HCT116 (cell line): ENCODE measurements at regions of chr22 and their contacts with region 1.

Region 1: GRCh38 chr22:37316875-37317371 is 34.6 kb downstream of the CYTH4 start:
- DNase-seq: peak; percentile 90
- ATAC-seq: peak; percentile 84
- H3K4me3 ChIP-seq: no peak overlapping the region
- H3K27ac ChIP-seq: peak overlapping the region; percentile 100
- H3K4me1 ChIP-seq: peaks cover 60 to 81% of the 10 kb centered on the region in 2 experiments
- H3K27me3 ChIP-seq: no peaks in the 10 kb centered on the region
- CTCF ChIP-seq: peak in 2 of 3 experiments; percentile 99; a peak in 4 of 6 replicates
- POLR2A ChIP-seq: no peak
- RAD21 ChIP-seq: no peak

Region 2: DNA sequence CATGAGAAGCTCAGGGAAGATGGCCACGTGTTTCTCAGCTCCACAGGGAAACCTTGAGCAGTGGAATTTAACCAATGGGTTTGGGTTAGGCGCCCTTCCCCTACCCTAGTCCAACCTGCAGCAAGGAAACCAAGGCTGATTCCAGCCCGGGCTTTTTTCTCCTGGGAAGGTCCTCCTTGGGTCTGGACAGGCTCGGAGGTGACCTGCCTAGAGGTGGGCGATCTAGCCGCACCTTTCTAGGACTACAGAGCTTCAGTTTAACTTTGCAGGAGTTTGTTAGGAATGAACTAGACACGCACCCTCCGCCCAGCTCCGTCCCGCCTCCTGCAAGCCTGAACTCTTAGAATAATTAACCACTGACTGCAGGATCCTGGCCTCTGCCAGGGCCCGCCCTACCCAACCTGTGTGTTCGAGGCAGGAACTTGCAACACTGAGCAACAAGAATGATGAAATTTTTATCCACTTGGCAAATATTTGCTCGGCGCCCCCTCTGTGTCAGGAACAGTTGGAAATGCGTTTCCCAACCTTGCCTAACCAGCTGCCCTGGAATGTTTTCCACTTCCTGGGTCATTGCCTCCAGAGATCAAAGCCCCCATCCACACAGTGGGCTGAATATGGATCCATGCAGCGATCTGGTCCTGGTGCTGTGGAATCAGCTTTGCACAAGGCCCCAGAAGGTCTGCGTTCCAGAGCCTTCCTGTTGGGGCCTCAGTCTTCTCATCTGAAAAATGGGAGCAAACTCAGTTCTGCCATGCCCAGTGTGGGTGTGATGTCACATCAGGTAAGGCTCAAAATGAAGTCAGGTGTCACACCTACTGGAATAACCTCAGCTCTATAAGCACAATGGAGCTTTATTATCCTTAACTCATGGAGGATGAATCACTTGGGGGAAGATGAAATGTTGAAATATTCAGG is 284.1 kb before region 1 on chr22:
- CTCF ChIA-PET with region 1: no interaction called
- POLR2A ChIA-PET with region 1: no interaction called
- RAD21 ChIA-PET with region 1: no interaction called
- intact Hi-C with region 1: no loop called
- DNase-seq: no peak
- ATAC-seq: peak; percentile 45; the same call in 1 of the 2 replicates
- H3K4me3 ChIP-seq: no peak overlapping the region
- H3K27ac ChIP-seq: no peak overlapping the region
- H3K4me1 ChIP-seq: peaks cover 4 to 15% of the 10 kb centered on the region in 2 experiments; a peak in 3 of 4 replicates
- H3K27me3 ChIP-seq: no peaks in the 10 kb centered on the region
- CTCF ChIP-seq: no peak
- POLR2A ChIP-seq: no peak
- RAD21 ChIP-seq: no peak

Region 3: DNA sequence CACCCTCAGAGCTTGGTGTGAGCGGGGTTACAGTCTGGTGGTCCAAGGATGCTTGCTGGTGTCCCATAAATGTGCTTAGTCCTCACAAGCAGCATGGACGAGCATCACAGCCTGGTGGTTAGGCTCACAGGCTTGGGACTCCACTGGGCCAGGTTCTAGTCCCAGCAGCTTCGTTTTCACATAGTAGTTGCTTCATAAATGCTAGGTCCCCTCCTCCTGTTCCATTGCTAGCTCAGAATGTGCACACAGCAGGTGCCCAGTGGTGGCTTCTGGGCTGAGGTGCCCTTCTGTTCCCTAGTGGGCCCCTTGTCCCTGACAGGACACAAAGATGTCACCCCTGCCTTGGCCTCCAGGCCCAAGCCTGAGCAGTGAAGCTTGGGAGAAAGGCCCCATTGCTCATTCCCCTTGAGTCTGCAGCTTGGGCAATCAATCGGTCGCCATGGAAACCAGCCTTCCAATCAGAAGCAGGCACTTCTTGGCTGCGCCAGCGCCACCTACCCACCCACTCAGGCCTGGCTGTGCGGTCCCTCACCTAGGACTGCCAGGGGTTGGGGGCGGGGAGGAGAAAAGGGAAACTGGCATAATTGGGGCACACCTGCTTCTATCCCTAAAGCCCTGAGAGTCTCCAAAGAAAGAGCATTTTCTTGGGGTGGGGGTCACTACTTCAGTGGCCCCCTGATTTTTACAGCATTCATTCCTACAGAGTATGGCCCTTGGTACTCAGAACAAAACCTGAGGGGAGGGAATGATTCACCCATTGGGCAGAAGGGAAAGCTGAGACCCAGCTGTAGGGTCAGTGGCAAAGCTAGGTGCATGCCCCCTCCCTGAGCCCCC is 13.5 kb after region 1 on chr22:
- CTCF ChIA-PET with region 1: interaction called, 101 read pairs
- POLR2A ChIA-PET with region 1: interaction called, 152 read pairs
- RAD21 ChIA-PET with region 1: interaction called, 13 to 24 read pairs
- intact Hi-C with region 1: loop called (anchors 1 kb)
- DNase-seq: peak; percentile 96
- ATAC-seq: peak; percentile 60
- H3K4me3 ChIP-seq: peak overlapping the region; percentile 17 to 29
- H3K27ac ChIP-seq: peak overlapping the region; percentile 100
- H3K4me1 ChIP-seq: peaks cover 81 to 96% of the 10 kb centered on the region in 2 experiments
- H3K27me3 ChIP-seq: no peaks in the 10 kb centered on the region
- CTCF ChIP-seq: peak in 2 of 3 experiments; percentile 55 to 62; a peak in 4 of 6 replicates
- POLR2A ChIP-seq: no peak
- RAD21 ChIP-seq: no peak

Region 4: DNA sequence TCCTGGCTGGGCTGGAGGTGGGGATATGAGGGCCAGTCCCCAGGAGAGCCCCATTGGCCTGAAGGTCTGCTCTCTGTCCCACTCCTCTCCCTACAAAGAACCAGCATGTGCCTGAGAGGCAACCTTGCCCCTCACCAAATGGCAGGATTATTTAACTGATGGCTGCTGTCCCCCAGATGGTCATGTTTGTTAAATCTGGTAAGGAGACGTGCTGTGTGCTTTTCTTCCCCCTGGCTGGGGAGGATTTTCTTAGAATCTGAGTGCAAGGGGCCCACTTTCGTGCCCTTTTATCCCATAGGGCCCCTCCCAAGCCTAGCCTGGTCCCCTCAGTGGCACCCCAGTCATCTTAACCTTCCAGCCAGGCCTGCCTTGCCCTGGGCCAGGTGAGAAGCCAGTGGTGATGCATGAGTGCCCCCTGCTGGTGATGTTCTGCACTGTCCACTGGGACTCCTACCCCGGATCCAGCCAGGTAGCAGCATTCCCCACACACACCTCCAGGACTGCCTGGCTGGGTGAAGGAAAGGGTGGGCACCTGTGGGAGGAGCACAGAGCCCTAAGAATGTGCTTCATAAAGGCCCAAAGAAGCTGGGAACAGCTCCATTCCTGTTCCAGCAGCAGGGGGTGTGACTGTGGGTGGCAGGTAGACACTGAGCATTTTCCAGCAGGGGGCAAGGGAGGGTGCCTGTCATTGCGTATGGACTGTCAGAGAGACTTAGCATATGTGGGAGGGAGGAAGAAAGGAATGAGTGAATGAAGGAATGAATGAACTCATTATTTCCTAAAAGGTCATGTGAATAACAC is 140.4 kb after region 1 on chr22:
- CTCF ChIA-PET with region 1: interaction called, 147 read pairs
- POLR2A ChIA-PET with region 1: interaction called, 54 read pairs
- RAD21 ChIA-PET with region 1: interaction called, 56 to 63 read pairs
- intact Hi-C with region 1: loop called (anchors 1 kb)
- DNase-seq: peak; percentile 79
- ATAC-seq: peak; percentile 87
- H3K4me3 ChIP-seq: no peak overlapping the region
- H3K27ac ChIP-seq: peak overlapping the region; percentile 96
- H3K4me1 ChIP-seq: peaks cover 49 to 59% of the 10 kb centered on the region in 2 experiments
- H3K27me3 ChIP-seq: no peaks in the 10 kb centered on the region; the same call in 1 of the 2 replicates
- CTCF ChIP-seq: peak; percentile 97 to 99 (median 98)
- POLR2A ChIP-seq: no peak
- RAD21 ChIP-seq: peak; percentile 100

Region 5: GRCh38 chr22:37566903-37567820 is 250.2 kb after region 1 on chr22:
- CTCF ChIA-PET with region 1: interaction called, 32 read pairs
- POLR2A ChIA-PET with region 1: interaction called, 3 read pairs
- RAD21 ChIA-PET with region 1: interaction called, 3 read pairs
- intact Hi-C with region 1: loop called (anchors 2 kb)
- DNase-seq: peak; percentile 84
- ATAC-seq: peak; percentile 62
- H3K4me3 ChIP-seq: no peak overlapping the region
- H3K27ac ChIP-seq: peak overlapping the region; percentile 72
- H3K4me1 ChIP-seq: peaks cover 76 to 98% of the 10 kb centered on the region in 2 experiments
- H3K27me3 ChIP-seq: no peaks in the 10 kb centered on the region
- CTCF ChIP-seq: peak in 2 of 3 experiments; percentile 94 to 97; a peak in 4 of 6 replicates
- POLR2A ChIP-seq: no peak
- RAD21 ChIP-seq: no peak

Region 6: GRCh38 chr22:38599466-38599865 is 1282.5 kb after region 1 on chr22:
- CTCF ChIA-PET with region 1: no interaction called
- POLR2A ChIA-PET with region 1: no interaction called
- RAD21 ChIA-PET with region 1: no interaction called
- intact Hi-C with region 1: no loop called
- DNase-seq: no peak
- ATAC-seq: no peak
- H3K4me3 ChIP-seq: no peak overlapping the region
- H3K27ac ChIP-seq: no peak overlapping the region
- H3K4me1 ChIP-seq: no peaks in the 10 kb centered on the region
- H3K27me3 ChIP-seq: no peaks in the 10 kb centered on the region
- CTCF ChIP-seq: no peak
- POLR2A ChIP-seq: no peak
- RAD21 ChIP-seq: no peak